Activated T-helper 2 cell treated with anti-CD3 and anti-CD28 coated beads, Interferon-gamma antibody, Interleukin-2, Interleukin-4, amounts not matched to agents 10 μg/mL and 5 μg/mL and 100 μg/mL, durations not matched to agents 14 hours and 24 hours and 36 hours (primary cell): ENCODE measurements at regions of chr4 and their contacts with region 1.

Region 1: GRCh38 chr4:37891260-37892159 is 626 bp downstream of the TBC1D1 start:
- DNase-seq: peak; percentile 63
- H3K4me3 Mint-ChIP-seq: peak overlapping the region; percentile 87
- H3K27ac Mint-ChIP-seq: peak overlapping the region; percentile 89
- H3K4me1 Mint-ChIP-seq: peaks cover 43% of the 10 kb centered on the region
- H3K27me3 Mint-ChIP-seq: peaks cover 10% of the 10 kb centered on the region

Region 2: DNA sequence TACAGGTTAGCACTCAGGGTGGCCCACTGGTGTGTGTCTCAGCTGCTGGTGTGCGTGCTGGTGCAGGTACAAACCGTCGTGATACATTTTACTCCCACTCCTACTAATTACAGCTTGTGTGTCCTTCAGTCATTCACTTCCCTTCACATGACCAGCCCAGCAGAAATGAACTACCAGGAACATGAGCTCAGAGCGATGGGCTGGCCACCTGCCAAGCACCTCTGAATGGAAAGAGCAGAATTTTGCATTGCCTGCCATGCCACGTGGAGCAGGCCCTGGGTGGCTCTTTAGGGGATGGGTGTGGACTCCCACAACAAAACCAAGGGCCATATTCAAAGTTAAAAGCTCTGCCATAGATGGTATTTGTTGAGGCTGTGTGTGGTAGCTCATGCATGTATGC is 124.0 kb before region 1 on chr4:
- intact Hi-C with region 1: no loop called
- DNase-seq: no peak
- H3K4me3 Mint-ChIP-seq: no peak overlapping the region
- H3K27ac Mint-ChIP-seq: no peak overlapping the region
- H3K4me1 Mint-ChIP-seq: peaks cover 6% of the 10 kb centered on the region
- H3K27me3 Mint-ChIP-seq: peaks cover under 1% of the 10 kb centered on the region

Region 3: GRCh38 chr4:37826295-37827029 is 65.0 kb before region 1 on chr4 and contains the start of gene PGM2:
- intact Hi-C with region 1: loop called (anchors 1 kb)
- DNase-seq: peak; percentile 88
- H3K4me3 Mint-ChIP-seq: peak within 1 kb of the TSS; percentile 91
- H3K27ac Mint-ChIP-seq: peak within 1 kb of the TSS; percentile 87
- H3K4me1 Mint-ChIP-seq: peaks cover 43% of the 10 kb centered on the region
- H3K27me3 Mint-ChIP-seq: peaks cover 5% of the 10 kb centered on the region
- total RNA-seq, gene PGM2: 49.3 and 52.5 TPM in 2 replicates

Region 4: DNA sequence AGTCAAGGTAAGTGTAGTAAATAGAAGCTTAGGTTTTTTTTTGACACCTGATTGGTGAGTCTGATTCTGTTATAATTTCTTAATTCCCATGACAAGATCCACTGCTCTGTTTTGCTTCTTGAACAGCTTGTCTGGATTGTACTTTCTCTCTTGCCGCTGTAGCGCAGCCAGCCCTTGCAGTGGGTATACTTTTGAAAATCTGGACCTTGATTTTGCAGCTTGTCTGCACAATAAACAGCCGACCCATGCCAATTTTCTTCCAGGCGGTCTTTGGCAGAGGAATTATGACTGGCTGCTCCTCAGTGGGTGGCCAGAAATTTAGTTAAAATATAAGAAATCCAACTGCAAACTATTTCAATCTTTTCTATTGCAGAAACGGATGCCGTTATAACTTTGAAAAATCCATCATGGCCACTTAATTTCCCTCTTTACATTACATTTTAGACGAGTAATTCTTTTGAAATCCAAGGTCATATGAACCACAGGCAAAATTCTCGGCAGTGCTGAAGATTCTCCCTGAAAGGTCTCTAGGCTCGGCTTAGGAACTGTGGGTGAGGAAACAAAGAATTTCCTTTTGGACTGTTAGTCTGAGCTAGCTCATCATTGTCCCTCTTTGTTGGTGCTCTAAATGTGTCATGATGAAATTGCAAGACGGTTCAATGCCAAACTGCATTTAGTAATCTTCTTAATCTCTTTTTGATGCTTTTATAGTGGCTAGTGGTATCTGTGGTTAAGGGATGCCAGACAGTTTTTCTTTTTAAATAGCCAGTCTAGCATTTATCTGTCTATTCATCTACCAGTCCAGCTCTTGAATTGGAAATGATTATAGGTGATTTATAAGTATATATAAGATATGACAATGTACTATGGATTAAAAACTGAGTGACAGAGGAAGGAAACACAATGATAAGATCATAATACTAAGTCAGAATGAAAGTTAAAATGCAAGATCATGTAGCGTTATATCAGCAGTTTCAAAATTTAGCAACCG is 37.2 kb after region 1 on chr4:
- intact Hi-C with region 1: loop called (anchors 1 kb)
- DNase-seq: no peak
- H3K4me3 Mint-ChIP-seq: no peak overlapping the region
- H3K27ac Mint-ChIP-seq: peak overlapping the region; percentile 7
- H3K4me1 Mint-ChIP-seq: peaks cover 32% of the 10 kb centered on the region
- H3K27me3 Mint-ChIP-seq: no peaks in the 10 kb centered on the region

Region 5: DNA sequence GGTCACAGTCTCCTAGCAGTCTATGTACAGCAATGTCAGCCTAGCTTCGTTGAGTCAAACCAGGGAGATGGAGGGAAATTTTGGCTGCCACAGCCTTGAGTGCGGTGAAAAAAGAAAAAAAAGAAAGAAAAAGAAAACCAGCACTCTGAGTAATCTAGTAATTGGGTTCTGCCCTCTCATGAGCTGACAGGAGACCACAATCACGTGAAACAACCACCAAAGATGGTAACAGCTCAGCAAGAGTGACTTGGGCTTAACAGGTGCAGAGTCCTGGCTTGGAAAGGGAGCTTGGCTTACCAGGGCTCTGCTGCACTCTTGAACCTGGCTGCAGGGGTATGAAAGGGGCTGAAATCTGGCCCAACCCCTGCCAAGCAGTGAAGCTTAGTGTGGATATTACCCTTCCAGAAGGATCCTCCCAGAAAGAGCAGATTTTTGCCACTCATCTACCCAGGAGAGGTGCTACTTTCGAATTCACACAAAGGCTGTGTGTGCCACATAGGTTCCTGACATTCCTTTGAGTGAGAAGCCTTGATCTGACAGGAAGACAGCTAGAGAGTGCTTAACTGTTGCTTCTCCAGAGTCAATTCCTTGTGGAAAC is 419.0 kb after region 1 on chr4:
- intact Hi-C with region 1: loop called (anchors 5 kb)
- DNase-seq: peak; percentile 77
- H3K4me3 Mint-ChIP-seq: no peak overlapping the region
- H3K27ac Mint-ChIP-seq: peak overlapping the region; percentile 38
- H3K4me1 Mint-ChIP-seq: peaks cover 58% of the 10 kb centered on the region
- H3K27me3 Mint-ChIP-seq: peaks cover 36% of the 10 kb centered on the region

Region 6: DNA sequence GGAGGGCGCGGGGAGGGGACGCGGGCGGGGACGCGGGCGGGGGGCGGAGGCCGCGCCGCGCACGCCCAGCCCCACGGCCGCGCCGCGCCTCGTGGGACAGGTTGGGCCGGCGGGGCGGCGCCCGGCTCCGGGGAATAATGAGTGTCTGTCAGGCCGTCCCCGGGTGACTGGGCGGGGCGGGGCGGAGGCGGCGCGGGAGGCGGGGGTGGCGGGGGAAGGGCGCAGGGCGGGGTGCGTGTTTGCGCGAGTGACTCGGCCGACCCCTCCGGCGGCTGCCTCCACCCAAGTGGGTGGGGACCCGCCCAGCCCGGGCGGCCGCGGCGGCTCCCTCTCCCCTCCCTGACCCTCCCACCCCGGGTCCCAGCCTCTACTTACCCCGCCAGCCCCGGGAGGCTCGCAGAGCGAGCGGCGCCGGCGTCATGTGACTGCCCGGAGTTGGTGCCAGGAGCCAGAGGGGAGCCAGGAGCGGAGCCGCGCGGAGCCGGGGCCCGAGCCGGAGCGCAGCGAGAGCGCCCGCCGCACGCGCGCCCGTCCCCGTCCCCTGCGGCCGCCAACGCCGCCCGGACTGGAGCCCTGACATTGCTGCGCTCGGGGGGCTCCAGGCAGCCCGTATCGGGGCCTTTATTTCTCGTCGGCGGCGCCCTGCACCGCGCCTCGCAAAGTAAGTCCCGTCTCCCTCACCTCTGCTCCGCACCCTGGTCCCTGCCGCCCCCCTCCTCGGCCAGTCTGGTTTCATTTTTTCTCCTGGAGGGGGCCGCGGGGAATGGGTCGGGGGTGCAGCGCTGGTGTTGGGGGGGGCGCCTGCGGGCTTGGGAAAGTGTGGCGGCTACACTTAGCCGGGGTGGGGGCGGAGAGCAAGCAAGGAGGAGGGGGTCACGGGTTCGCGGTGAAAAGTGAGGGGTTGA is 772.5 kb after region 1 on chr4 and contains the start of gene KLF3:
- intact Hi-C with region 1: loop called (anchors 10 kb)
- DNase-seq: peak; percentile 78
- H3K4me3 Mint-ChIP-seq: peak within 1 kb of the TSS; percentile 75
- H3K27ac Mint-ChIP-seq: no peak within 1 kb of the TSS
- H3K4me1 Mint-ChIP-seq: peaks cover 23% of the 10 kb centered on the region
- H3K27me3 Mint-ChIP-seq: peaks cover 65% of the 10 kb centered on the region
- total RNA-seq, gene KLF3: 0.62 and 0.71 TPM in 2 replicates